Activated naive CD4-positive, alpha-beta T cell treated with anti-CD3 and anti-CD28 coated beads for 36 hours (primary cell): ENCODE measurements at regions of chr19 and their contacts with region 1.

Region 1: GRCh38 chr19:45817010-45817724 is 2.1 kb upstream of the RSPH6A start:
- DNase-seq: peak; percentile 99
- H3K4me3 Mint-ChIP-seq: no peak overlapping the region
- H3K27ac Mint-ChIP-seq: no peak overlapping the region
- H3K4me1 Mint-ChIP-seq: peaks cover 10% of the 10 kb centered on the region
- H3K27me3 Mint-ChIP-seq: peaks cover 19% of the 10 kb centered on the region

Region 2: DNA sequence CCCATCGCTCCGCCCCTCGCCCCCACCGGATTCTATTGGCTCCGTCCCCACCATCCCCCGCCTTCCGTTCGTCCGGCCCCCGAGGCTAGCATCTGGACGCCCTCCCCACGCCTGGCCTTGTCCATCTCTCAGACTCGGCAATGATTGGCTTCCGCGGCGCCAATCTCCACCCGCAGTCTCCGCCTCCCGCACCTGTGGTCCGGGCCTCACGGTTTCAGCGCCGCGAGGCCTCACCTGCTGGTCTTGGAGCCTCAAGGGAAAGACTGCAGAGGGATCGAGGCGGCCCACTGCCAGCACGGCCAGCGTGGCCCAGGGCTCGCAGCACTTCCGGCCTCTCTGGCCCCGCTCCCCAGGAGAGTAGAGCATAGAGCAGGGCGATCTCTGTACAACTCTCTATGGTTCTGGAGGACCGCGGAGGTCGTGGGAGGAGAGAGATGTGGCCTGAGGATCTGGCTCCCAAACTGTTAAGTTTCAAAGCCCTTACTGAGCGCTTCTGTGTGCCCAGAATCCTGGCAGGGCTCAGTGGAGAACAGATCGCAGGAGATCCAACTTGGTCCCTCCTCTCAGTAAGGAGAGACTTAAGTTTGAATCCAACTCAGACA is 393.5 kb before region 1 on chr19 and contains the start of gene ERCC1:
- CTCF ChIA-PET with region 1: no interaction called
- intact Hi-C with region 1: no loop called
- DNase-seq: peak; percentile 90
- H3K4me3 Mint-ChIP-seq: peak within 1 kb of the TSS; percentile 94
- H3K27ac Mint-ChIP-seq: peak within 1 kb of the TSS; percentile 90
- H3K4me1 Mint-ChIP-seq: peaks cover 63% of the 10 kb centered on the region
- H3K27me3 Mint-ChIP-seq: peaks cover 3% of the 10 kb centered on the region
- total RNA-seq, gene ERCC1: 28.9 to 30.7 TPM

Region 3: DNA sequence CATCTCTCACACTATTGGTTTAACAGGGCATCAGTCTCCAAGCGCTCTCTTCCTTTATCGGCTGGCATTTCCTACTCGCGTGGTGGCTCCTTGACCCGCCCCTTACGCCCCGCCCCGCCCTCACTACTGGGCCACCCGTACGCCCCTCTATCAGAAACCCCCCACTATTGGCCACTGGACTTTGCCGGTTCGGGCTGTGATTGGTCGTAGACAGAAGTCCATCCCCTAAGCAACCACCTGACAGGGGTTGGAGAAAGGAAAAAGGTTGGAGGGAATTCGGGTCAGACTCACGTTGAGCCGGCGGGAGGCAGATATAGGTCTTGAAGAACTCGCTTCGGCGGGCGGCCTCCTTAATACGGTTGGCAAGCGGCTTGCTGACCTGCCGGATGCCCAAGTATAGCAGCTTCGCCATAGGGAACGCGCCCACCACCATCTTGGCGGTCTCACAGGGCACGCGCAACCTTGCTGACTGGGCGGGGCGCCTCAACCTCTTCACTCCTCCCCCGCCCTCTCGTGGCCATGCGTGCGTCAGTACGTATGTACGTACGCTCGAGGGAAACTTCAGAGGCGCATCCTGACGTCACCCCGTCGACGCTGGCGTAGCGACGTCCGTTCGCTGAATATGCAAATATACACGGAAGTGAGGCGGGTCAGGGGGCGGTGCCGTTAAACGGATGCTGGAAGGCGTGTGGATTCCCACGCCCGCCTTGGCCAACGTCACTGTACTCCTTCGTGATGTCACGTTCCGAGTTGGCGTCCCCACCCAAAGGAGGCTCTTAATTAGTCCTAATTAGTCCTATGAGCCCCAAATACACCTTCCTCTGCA is 232.6 kb before region 1 on chr19 and contains the start of gene OPA3:
- CTCF ChIA-PET with region 1: no interaction called
- intact Hi-C with region 1: no loop called
- DNase-seq: peak; percentile 100
- H3K4me3 Mint-ChIP-seq: peak within 1 kb of the TSS; percentile 89
- H3K27ac Mint-ChIP-seq: peak within 1 kb of the TSS; percentile 98
- H3K4me1 Mint-ChIP-seq: peaks cover 14% of the 10 kb centered on the region
- H3K27me3 Mint-ChIP-seq: peaks cover 3% of the 10 kb centered on the region
- total RNA-seq, gene OPA3: 12.4 to 12.7 TPM

Region 4: GRCh38 chr19:45681391-45682015 is 135.7 kb before region 1 on chr19:
- CTCF ChIA-PET with region 1: no interaction called
- intact Hi-C with region 1: no loop called
- DNase-seq: peak; percentile 90
- H3K4me3 Mint-ChIP-seq: peak overlapping the region; percentile 71
- H3K27ac Mint-ChIP-seq: no peak overlapping the region
- H3K4me1 Mint-ChIP-seq: peaks cover 20% of the 10 kb centered on the region
- H3K27me3 Mint-ChIP-seq: no peaks in the 10 kb centered on the region

Region 5: GRCh38 chr19:45798995-45799517 is 18.1 kb before region 1 on chr19:
- CTCF ChIA-PET with region 1: interaction called, 10 read pairs
- intact Hi-C with region 1: no loop called
- DNase-seq: peak; percentile 69
- H3K4me3 Mint-ChIP-seq: no peak overlapping the region
- H3K27ac Mint-ChIP-seq: no peak overlapping the region
- H3K4me1 Mint-ChIP-seq: peaks cover 4% of the 10 kb centered on the region
- H3K27me3 Mint-ChIP-seq: peaks cover 30% of the 10 kb centered on the region

Region 6: DNA sequence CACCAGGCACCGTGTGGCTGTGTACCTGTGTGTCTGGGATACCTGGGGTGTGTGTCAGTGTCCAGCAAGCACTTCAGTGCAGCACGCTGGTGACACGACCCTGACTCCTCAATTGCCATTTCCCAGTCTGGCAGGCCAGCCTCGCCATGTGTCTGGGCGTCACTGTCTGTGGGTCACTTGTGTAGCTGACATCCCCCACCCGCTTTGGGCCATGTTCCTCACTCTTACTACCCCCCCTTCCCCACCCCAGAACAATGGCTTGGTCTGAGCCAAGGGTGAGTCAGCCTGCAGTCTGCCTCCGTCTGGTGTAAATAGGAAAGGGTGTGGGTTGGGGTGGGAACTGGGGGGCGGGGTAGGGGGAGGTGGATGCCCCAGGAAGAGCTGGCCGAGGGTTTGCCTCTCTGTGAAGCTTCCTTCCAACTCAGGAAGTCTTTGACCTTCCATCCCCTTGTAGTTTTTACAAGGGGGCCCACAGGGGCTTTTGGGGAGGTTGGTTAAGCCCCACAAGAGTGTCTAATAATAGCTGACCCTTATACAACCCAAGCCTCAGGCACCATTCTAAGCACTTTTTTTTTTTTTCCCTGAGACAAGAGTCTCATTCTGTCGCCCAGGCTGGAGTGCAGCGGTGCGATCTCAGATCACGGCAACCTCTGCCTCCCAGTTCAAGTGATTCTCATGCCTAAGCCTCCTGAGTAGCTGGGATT is 138.9 kb after region 1 on chr19:
- CTCF ChIA-PET with region 1: no interaction called
- intact Hi-C with region 1: no loop called
- DNase-seq: no peak
- H3K4me3 Mint-ChIP-seq: no peak overlapping the region
- H3K27ac Mint-ChIP-seq: no peak overlapping the region
- H3K4me1 Mint-ChIP-seq: peaks cover 9% of the 10 kb centered on the region
- H3K27me3 Mint-ChIP-seq: peaks cover 40% of the 10 kb centered on the region